Endothelial cell of umbilical vein (primary cell): ENCODE measurements at regions of chr11 and their contacts with region 1.

Region 1: GRCh38 chr11:128595221-128595620 is 7.9 kb upstream of the ETS1 start:
- DNase-seq: peak; percentile 93
- H3K4me3 ChIP-seq: no peak overlapping the region
- H3K27ac ChIP-seq: no peak overlapping the region
- H3K4me1 ChIP-seq: peaks cover 9% of the 10 kb centered on the region
- H3K27me3 ChIP-seq: peaks cover 17 to 20% of the 10 kb centered on the region in 2 experiments
- CTCF ChIP-seq: no peak
- POLR2A ChIP-seq: no peak

Region 2: GRCh38 chr11:128575961-128576350 is 19.3 kb before region 1 on chr11:
- CTCF ChIA-PET with region 1: interaction called, 7 read pairs
- POLR2A ChIA-PET with region 1: no interaction called
- dilution Hi-C with region 1: no loop called
- intact Hi-C with region 1: loop called (anchors 1 kb)
- DNase-seq: peak; percentile 96
- H3K4me3 ChIP-seq: no peak overlapping the region
- H3K27ac ChIP-seq: peak overlapping the region; percentile 84
- H3K4me1 ChIP-seq: peaks cover 43% of the 10 kb centered on the region
- H3K27me3 ChIP-seq: no peaks in the 10 kb centered on the region
- CTCF ChIP-seq: no peak
- POLR2A ChIP-seq: peak; percentile 28

Region 3: GRCh38 chr11:128610721-128611617 is 15.7 kb after region 1 on chr11:
- CTCF ChIA-PET with region 1: interaction called, 12 read pairs
- POLR2A ChIA-PET with region 1: no interaction called
- dilution Hi-C with region 1: no loop called
- intact Hi-C with region 1: no loop called
- DNase-seq: peak; percentile 79
- H3K4me3 ChIP-seq: no peak overlapping the region
- H3K27ac ChIP-seq: no peak overlapping the region
- H3K4me1 ChIP-seq: peaks cover 3% of the 10 kb centered on the region
- H3K27me3 ChIP-seq: peaks cover 6 to 29% of the 10 kb centered on the region in 2 experiments
- CTCF ChIP-seq: no peak
- POLR2A ChIP-seq: no peak